ENCODE measurements at regions of chr4 and their contacts with region 1.

Region 1: GRCh38 chr4:87911252-87911774 is 64.2 kb upstream of the SPP1 start:
- DNase-seq: no peak
- H3K4me3 ChIP-seq: no peak overlapping the region
- H3K27ac ChIP-seq: no peak overlapping the region
- H3K4me1 ChIP-seq: peaks cover 0 to 12% (median 9%) of the 10 kb centered on the region in 4 experiments
- H3K27me3 ChIP-seq: no peaks in the 10 kb centered on the region
- CTCF ChIP-seq: no peak
- EP300 ChIP-seq: no peak
- POLR2A ChIP-seq: no peak
- RAD21 ChIP-seq: no peak

Region 2: DNA sequence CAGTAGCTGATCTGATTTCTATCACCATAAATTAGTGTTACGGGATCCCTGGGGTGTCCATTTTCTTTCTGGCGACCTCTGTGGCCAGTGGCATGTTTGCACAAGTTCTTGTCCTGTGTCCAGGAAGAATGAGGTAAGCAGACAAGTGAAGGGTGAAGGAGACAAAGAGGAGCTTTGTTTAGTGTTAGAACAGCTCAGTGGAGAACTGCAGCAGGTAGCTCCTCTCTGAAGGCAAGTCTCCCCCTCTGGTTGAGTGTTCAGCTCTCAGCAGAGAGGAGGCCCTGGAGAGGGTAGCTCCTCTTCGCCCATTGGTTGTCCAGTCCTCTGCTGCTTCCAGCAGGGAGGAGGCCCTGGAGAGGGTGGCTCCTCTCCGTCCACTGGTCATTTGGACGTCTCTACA is 214.0 kb before region 1 on chr4:
- CTCF ChIA-PET with region 1: no interaction called
- POLR2A ChIA-PET with region 1: no interaction called
- DNase-seq: no peak
- H3K4me3 ChIP-seq: no peak overlapping the region
- H3K27ac ChIP-seq: no peak overlapping the region
- H3K4me1 ChIP-seq: no peaks in the 10 kb centered on the region
- H3K27me3 ChIP-seq: no peaks in the 10 kb centered on the region
- CTCF ChIP-seq: no peak; a peak in 1 of 4 replicates
- EP300 ChIP-seq: no peak
- POLR2A ChIP-seq: no peak
- RAD21 ChIP-seq: no peak

Region 3: DNA sequence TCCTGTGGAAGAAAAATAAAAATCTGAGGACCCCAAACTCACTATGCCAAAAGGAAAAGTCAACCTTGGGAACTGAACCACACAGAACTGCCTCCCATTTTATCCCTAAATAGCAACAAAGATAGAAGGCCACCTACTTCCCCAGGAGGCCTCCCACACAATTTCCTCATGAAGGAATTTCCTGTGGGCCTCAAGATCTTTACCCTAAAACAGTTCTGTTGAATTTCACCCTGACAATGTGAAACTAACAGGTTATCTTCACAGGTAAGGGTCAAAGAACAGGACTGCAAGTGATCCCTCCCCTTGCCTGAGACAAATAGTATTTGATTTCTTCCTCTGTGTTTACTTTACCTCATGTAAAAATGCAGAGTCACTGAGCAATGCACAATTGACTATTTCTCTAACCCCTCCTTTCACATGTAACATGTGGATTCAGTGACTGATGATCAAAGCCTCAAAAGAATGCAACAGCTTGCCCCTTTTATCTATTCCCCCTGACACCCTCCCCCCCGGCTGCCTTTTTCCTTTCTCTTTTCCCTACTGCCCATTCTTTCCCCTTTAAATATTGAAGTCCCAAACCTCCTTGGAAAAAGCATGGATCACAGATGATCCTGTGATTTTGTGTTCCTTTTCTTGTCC is 45.2 kb before region 1 on chr4:
- CTCF ChIA-PET with region 1: interaction called, 5 read pairs
- POLR2A ChIA-PET with region 1: interaction called, 18 read pairs
- DNase-seq: peak in 1 of 2 experiments; percentile 47
- H3K4me3 ChIP-seq: peak overlapping the region in 3 of 4 experiments; percentile 15 to 55 (median 15); a peak in 3 of 8 replicates
- H3K27ac ChIP-seq: peak overlapping the region; percentile 59; the same call in 1 of the 2 replicates
- H3K4me1 ChIP-seq: peaks cover 0 to 14% (median 7%) of the 10 kb centered on the region in 4 experiments; a peak in 3 of 7 replicates
- H3K27me3 ChIP-seq: no peaks in the 10 kb centered on the region
- CTCF ChIP-seq: no peak
- EP300 ChIP-seq: no peak; a peak in 1 of 3 replicates
- POLR2A ChIP-seq: peak; percentile 45 to 60; a peak in 2 of 3 replicates
- RAD21 ChIP-seq: no peak

Region 4: GRCh38 chr4:87926554-87927098 is 15.3 kb after region 1 on chr4:
- CTCF ChIA-PET with region 1: no interaction called
- POLR2A ChIA-PET with region 1: interaction called, 18 read pairs
- DNase-seq: no peak
- H3K4me3 ChIP-seq: peak overlapping the region; percentile 34 to 69 (median 36)
- H3K27ac ChIP-seq: no peak overlapping the region
- H3K4me1 ChIP-seq: peaks cover 0 to 3% (median under 1%) of the 10 kb centered on the region in 4 experiments; a peak in 1 of 7 replicates
- H3K27me3 ChIP-seq: no peaks in the 10 kb centered on the region
- CTCF ChIP-seq: no peak
- EP300 ChIP-seq: no peak
- POLR2A ChIP-seq: peak; percentile 63 to 90
- RAD21 ChIP-seq: no peak

Region 5: GRCh38 chr4:88070031-88070430 is 158.7 kb after region 1 on chr4:
- CTCF ChIA-PET with region 1: no interaction called
- POLR2A ChIA-PET with region 1: no interaction called
- DNase-seq: no peak
- H3K4me3 ChIP-seq: no peak overlapping the region
- H3K27ac ChIP-seq: no peak overlapping the region
- H3K4me1 ChIP-seq: no peaks in the 10 kb centered on the region
- H3K27me3 ChIP-seq: no peaks in the 10 kb centered on the region
- CTCF ChIP-seq: no peak
- EP300 ChIP-seq: no peak
- POLR2A ChIP-seq: no peak
- RAD21 ChIP-seq: no peak

Measured in H1 (cell line).